PC-9 (cell line): ENCODE measurements at regions of chr7 and their contacts with region 1.

Region 1: GRCh38 chr7:73718905-73719805 is at the start of gene STX1A:
- DNase-seq: peak in 1 of 2 experiments; percentile 83
- H3K4me3 ChIP-seq: peak within 1 kb of the TSS; percentile 82
- H3K27ac ChIP-seq: peak within 1 kb of the TSS; percentile 86
- H3K4me1 ChIP-seq: peaks cover 54% of the 10 kb centered on the region
- H3K27me3 ChIP-seq: no peaks in the 10 kb centered on the region
- CTCF ChIP-seq: no peak
- total RNA-seq, gene STX1A: 39.1 and 40.5 TPM in 2 replicates

Region 2: DNA sequence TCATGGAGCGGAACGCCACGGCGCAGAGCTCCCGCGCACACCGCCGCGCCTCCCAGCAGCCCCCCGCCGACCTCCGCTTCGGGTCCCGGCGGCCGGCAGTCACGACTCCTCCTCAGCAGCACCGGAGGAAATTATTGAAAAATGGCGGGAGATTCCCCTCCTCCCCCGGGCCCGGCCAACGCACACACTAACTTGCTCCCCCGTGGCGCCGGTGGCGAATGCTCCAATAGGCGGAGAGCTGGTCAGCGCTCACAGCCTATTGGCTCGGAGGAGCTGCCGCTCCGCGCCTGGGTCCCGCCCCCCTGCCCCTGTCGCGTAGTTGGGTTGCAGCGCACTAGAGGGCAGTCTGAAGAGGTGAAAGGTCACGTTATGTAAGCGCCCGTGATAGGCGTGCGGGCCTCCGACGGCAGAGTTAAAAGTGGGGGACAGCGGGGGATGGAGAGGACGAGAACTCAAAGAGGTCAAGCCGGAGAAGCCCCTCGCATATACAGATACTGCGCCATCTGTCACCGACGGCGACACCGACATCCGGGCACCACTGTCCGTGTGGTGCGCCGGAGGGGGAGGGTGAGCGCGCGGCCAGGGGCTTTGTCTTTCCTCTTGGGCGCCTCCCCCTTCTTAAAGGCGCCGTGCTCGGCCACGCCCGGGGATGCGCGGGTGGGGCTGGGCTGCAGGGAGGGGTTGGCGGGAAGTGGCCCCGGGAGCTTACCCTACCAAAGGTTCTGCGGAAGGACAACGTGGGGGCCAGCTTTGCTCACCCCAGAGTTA is 196.9 kb before region 1 on chr7 and contains the start of gene BAZ1B:
- CTCF ChIA-PET with region 1: no interaction called
- POLR2A ChIA-PET with region 1: interaction called, 7 read pairs
- intact Hi-C with region 1: loop called (anchors 2 kb)
- DNase-seq: peak; percentile 93 to 98
- H3K4me3 ChIP-seq: peak within 1 kb of the TSS; percentile 84
- H3K27ac ChIP-seq: peak within 1 kb of the TSS; percentile 39
- H3K4me1 ChIP-seq: peaks cover 28% of the 10 kb centered on the region
- H3K27me3 ChIP-seq: no peaks in the 10 kb centered on the region
- CTCF ChIP-seq: no peak
- total RNA-seq, gene BAZ1B: 73.6 and 88.4 TPM in 2 replicates

Region 3: DNA sequence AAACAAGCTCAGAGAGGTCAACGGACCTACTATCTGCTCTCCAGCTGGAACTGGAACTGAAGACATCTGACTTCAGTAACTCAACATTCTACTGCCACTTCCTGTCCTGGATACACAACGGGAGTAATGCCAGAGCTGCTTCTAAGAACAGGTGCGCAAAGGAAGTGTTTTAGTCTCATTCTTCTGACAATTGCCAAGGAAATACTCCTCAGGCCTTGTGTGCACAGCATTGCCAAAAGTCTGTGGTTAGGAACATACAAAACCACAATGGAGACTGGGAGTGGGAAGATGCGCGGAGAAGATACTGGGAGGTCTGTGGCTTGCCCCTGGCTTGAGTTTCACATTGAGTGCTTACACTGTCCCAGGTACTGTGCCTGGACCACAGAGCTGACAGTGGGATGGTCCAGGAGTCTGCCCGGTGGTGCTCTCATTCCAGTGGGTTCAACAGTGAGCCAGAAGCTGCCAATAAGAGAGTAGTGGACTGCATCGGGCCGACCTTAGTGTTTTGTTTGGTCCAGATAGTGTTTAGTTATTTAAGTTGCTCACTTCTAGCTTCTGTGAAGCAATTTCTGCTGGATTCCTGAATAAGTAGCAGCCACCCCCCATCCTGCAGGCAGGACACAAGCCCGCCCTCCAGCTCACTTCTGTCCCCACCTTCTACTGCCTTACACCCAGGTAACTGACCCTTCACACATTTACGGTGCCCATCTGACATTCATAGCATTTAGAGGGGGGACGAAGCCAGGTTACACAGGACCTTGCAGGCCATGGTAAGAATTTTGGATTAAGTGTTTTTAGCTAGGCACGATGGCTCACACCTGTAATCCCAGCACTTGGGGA is 151.1 kb before region 1 on chr7:
- CTCF ChIA-PET with region 1: no interaction called
- POLR2A ChIA-PET with region 1: interaction called, 10 read pairs
- intact Hi-C with region 1: no loop called
- DNase-seq: no peak
- H3K4me3 ChIP-seq: no peak overlapping the region
- H3K27ac ChIP-seq: no peak overlapping the region
- H3K4me1 ChIP-seq: no peaks in the 10 kb centered on the region
- H3K27me3 ChIP-seq: no peaks in the 10 kb centered on the region
- CTCF ChIP-seq: no peak

Region 4: GRCh38 chr7:73667344-73668102 is 51.6 kb before region 1 on chr7 and contains the start of gene VPS37D:
- CTCF ChIA-PET with region 1: no interaction called
- POLR2A ChIA-PET with region 1: no interaction called
- intact Hi-C with region 1: loop called (anchors 5 kb)
- DNase-seq: peak; percentile 69 to 97
- H3K4me3 ChIP-seq: peak within 1 kb of the TSS; percentile 40; the same call in 1 of the 2 replicates
- H3K27ac ChIP-seq: no peak within 1 kb of the TSS
- H3K4me1 ChIP-seq: 0 out of 2 replicates have a peak, but pooled peaks cover 4% of the 10 kb centered on the region
- H3K27me3 ChIP-seq: no peaks in the 10 kb centered on the region
- CTCF ChIP-seq: peak; percentile 50; the same call in 1 of the 2 replicates
- total RNA-seq, gene VPS37D: 8.3 and 12.4 TPM in 2 replicates

Region 5: GRCh38 chr7:73707142-73707595 is 12.0 kb before region 1 on chr7:
- CTCF ChIA-PET with region 1: interaction called, 3 read pairs
- POLR2A ChIA-PET with region 1: interaction called, 8 read pairs
- intact Hi-C with region 1: loop called (anchors 1 kb)
- DNase-seq: peak; percentile 95 to 99
- H3K4me3 ChIP-seq: peak overlapping the region; percentile 25; the same call in 1 of the 2 replicates
- H3K27ac ChIP-seq: peak overlapping the region; percentile 85
- H3K4me1 ChIP-seq: peaks cover 34% of the 10 kb centered on the region
- H3K27me3 ChIP-seq: no peaks in the 10 kb centered on the region
- CTCF ChIP-seq: no peak

Region 6: GRCh38 chr7:73876973-73877372 is 157.8 kb after region 1 on chr7:
- CTCF ChIA-PET with region 1: no interaction called
- POLR2A ChIA-PET with region 1: no interaction called
- intact Hi-C with region 1: no loop called
- DNase-seq: no peak
- H3K4me3 ChIP-seq: no peak overlapping the region
- H3K27ac ChIP-seq: no peak overlapping the region
- H3K4me1 ChIP-seq: peaks cover 27% of the 10 kb centered on the region
- H3K27me3 ChIP-seq: no peaks in the 10 kb centered on the region
- CTCF ChIP-seq: no peak

Region 7: DNA sequence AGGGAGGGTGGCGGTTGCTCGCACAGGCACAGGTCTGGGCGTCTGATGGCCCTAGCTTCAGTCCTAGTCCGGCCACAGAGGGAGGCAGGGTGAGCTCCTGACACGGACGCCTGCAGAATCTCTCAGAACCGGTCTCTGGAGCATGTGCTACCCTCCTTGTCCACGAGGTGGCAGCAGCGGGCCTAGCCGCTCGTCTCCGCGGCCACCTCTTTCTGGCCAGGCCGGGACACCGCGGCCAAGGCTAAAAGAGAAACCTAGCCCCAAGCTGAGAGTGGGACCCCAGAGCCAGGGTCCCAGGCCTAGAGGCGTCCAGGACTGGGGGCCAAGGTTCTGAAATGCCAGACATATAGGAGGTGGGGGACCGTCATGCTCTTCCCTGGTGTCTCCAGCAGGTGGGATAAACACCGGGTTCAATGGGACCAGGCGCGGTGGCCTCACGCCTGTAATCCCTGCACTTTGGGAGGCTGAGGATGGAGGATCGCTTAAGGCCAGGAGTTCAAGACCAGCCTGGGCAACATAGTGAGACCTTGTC is 487.5 kb after region 1 on chr7:
- CTCF ChIA-PET with region 1: no interaction called
- POLR2A ChIA-PET with region 1: interaction called, 10 read pairs
- intact Hi-C with region 1: no loop called
- DNase-seq: peak; percentile 46 to 91
- H3K4me3 ChIP-seq: no peak overlapping the region
- H3K27ac ChIP-seq: no peak overlapping the region
- H3K4me1 ChIP-seq: peaks cover 14% of the 10 kb centered on the region
- H3K27me3 ChIP-seq: no peaks in the 10 kb centered on the region
- CTCF ChIP-seq: peak; percentile 97